PC-9 (cell line): ENCODE measurements at regions of chr13 and their contacts with region 1.

Region 1: DNA sequence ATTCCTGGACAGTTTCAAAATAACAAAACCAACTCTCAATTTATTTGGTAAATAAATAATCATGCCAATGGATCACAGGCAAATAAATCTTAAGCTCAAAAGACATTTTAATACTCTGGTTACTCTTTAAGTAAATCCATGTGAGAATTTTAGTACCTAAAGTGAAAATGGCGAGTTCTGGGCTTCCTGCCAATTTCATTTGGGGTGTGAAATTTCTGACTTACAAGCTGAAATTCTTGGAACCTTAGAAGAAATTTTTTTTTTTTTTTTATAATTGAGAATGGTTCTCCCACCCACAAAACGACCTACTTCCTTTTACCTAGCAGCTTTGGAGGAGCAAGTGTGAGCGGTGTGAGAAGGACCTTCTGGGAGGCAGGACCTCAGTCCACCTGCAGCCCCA is 354.5 kb upstream of the NBEA start:
- DNase-seq: no peak
- H3K4me3 ChIP-seq: no peak overlapping the region
- H3K27ac ChIP-seq: no peak overlapping the region
- H3K4me1 ChIP-seq: no peaks in the 10 kb centered on the region
- H3K27me3 ChIP-seq: no peaks in the 10 kb centered on the region
- CTCF ChIP-seq: no peak

Region 2: DNA sequence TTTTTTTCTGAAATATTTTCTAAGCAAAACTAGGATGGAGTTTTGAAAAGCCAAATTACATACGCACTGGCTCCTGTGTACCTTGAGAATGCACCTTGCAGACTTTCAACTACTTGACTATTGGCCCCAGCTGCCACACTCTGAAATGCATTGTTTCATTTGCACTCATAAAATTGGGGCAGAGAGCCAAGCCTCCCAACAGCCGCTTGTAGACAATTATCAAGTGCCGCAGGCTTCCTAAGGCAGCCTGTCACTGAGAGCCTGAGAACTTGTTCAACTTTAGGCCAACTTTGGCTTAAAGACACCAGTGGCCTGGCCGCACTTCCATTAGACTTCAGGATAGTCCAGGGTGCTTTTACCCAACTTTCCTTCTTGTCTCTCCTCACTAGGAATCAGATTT is 1186.3 kb before region 1 on chr13:
- CTCF ChIA-PET with region 1: no interaction called
- POLR2A ChIA-PET with region 1: no interaction called
- intact Hi-C with region 1: no loop called
- DNase-seq: no peak
- H3K4me3 ChIP-seq: no peak overlapping the region
- H3K27ac ChIP-seq: no peak overlapping the region
- H3K4me1 ChIP-seq: no peaks in the 10 kb centered on the region
- H3K27me3 ChIP-seq: no peaks in the 10 kb centered on the region
- CTCF ChIP-seq: no peak

Region 3: GRCh38 chr13:35690581-35691207 is 1103.1 kb after region 1 on chr13:
- CTCF ChIA-PET with region 1: interaction called, 12 read pairs
- POLR2A ChIA-PET with region 1: no interaction called
- intact Hi-C with region 1: no loop called
- DNase-seq: no peak
- H3K4me3 ChIP-seq: no peak overlapping the region
- H3K27ac ChIP-seq: no peak overlapping the region
- H3K4me1 ChIP-seq: no peaks in the 10 kb centered on the region
- H3K27me3 ChIP-seq: no peaks in the 10 kb centered on the region
- CTCF ChIP-seq: no peak